ENCODE measurements at regions of chr6 and their contacts with region 1.

Region 1: GRCh38 chr6:53725791-53726431 is 60.4 kb upstream of the KLHL31 start:
- DNase-seq: peak; percentile 79
- ATAC-seq: peak; percentile 94
- H3K4me3 ChIP-seq: no peak overlapping the region
- H3K4me3 Mint-ChIP-seq: no peak overlapping the region
- H3K27ac ChIP-seq: no peak overlapping the region
- H3K27ac Mint-ChIP-seq: peak overlapping the region; percentile 1
- H3K4me1 ChIP-seq: peaks cover 6 to 8% of the 10 kb centered on the region in 2 donors
- H3K4me1 Mint-ChIP-seq: peaks cover 4% of the 10 kb centered on the region
- H3K27me3 ChIP-seq: peaks cover 0 to 4% (median 0%) of the 10 kb centered on the region in 4 experiments
- H3K27me3 Mint-ChIP-seq: peaks cover 13% of the 10 kb centered on the region
- CTCF ChIP-seq: peak; percentile 98

Region 2: DNA sequence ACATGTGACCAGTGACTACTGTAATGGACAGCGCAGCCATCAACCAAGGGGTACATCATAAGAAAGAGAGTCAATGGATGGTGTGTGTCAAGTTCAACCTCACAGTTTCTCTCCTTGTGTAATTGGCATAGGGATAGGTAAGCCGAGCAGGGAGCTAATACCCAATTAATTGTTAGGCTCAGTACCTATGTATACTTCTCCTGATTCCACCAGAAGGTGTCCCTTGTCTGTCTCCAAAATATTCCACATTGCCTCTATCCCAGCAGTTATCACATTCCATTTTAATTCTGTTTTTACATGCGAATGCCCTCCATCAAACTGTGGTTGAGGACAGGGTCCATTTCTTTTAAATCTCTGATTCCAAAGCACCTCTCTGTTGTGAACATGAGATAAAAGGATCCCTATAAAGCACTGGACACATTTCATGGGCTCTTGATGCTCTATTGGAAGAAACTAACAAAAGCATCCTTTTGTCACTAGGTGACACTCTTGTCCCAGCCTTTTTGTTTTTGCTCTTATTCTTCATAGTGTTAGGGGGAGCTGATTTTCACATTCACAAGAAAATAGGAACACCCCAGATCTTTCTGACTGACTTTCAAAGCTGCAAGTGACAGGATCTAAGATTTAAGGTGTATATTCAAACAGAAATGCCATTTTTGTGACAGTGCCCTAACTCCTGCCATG is 621.8 kb before region 1 on chr6:
- CTCF ChIA-PET with region 1: interaction called, 3 read pairs
- POLR2A ChIA-PET with region 1: no interaction called
- intact Hi-C with region 1: loop called (anchors 1 kb)
- DNase-seq: peak; percentile 52
- ATAC-seq: peak; percentile 53
- H3K4me3 ChIP-seq: no peak overlapping the region
- H3K4me3 Mint-ChIP-seq: no peak overlapping the region
- H3K27ac ChIP-seq: no peak overlapping the region
- H3K27ac Mint-ChIP-seq: no peak overlapping the region
- H3K4me1 ChIP-seq: no peaks in the 10 kb centered on the region
- H3K4me1 Mint-ChIP-seq: no peaks in the 10 kb centered on the region
- H3K27me3 ChIP-seq: no peaks in the 10 kb centered on the region
- H3K27me3 Mint-ChIP-seq: no peaks in the 10 kb centered on the region
- CTCF ChIP-seq: peak; percentile 54

Region 3: GRCh38 chr6:53544470-53545308 is 181.2 kb before region 1 on chr6 and contains the start of gene GCLC:
- CTCF ChIA-PET with region 1: interaction called, 6 read pairs
- POLR2A ChIA-PET with region 1: no interaction called
- intact Hi-C with region 1: loop called (anchors 5 kb)
- DNase-seq: peak; percentile 95
- ATAC-seq: peak; percentile 67
- H3K4me3 ChIP-seq: peak within 1 kb of the TSS; percentile 45 to 81 (median 69)
- H3K4me3 Mint-ChIP-seq: peak within 1 kb of the TSS; percentile 97
- H3K27ac ChIP-seq: peak within 1 kb of the TSS in 1 of 2 donors; percentile 68
- H3K27ac Mint-ChIP-seq: peak within 1 kb of the TSS; percentile 93
- H3K4me1 ChIP-seq: peaks cover 22 to 32% of the 10 kb centered on the region in 2 donors
- H3K4me1 Mint-ChIP-seq: peaks cover 52% of the 10 kb centered on the region
- H3K27me3 ChIP-seq: no peaks in the 10 kb centered on the region
- H3K27me3 Mint-ChIP-seq: no peaks in the 10 kb centered on the region
- CTCF ChIP-seq: peak; percentile 81
- total RNA-seq, gene GCLC: 25.8 and 37.8 TPM in 2 replicates

Region 4: GRCh38 chr6:53710788-53711187 is 15.1 kb before region 1 on chr6:
- CTCF ChIA-PET with region 1: interaction called, 66 read pairs
- POLR2A ChIA-PET with region 1: no interaction called
- intact Hi-C with region 1: no loop called
- DNase-seq: no peak
- ATAC-seq: no peak
- H3K4me3 ChIP-seq: no peak overlapping the region
- H3K4me3 Mint-ChIP-seq: no peak overlapping the region
- H3K27ac ChIP-seq: no peak overlapping the region
- H3K27ac Mint-ChIP-seq: no peak overlapping the region
- H3K4me1 ChIP-seq: no peaks in the 10 kb centered on the region
- H3K4me1 Mint-ChIP-seq: no peaks in the 10 kb centered on the region
- H3K27me3 ChIP-seq: peaks cover 0 to 9% (median 0%) of the 10 kb centered on the region in 4 experiments
- H3K27me3 Mint-ChIP-seq: peaks cover 32% of the 10 kb centered on the region
- CTCF ChIP-seq: no peak

Region 5: GRCh38 chr6:53746442-53747103 is 20.7 kb after region 1 on chr6:
- CTCF ChIA-PET with region 1: interaction called, 18 read pairs
- POLR2A ChIA-PET with region 1: no interaction called
- intact Hi-C with region 1: no loop called
- DNase-seq: no peak
- ATAC-seq: no peak
- H3K4me3 ChIP-seq: no peak overlapping the region
- H3K4me3 Mint-ChIP-seq: no peak overlapping the region
- H3K27ac ChIP-seq: no peak overlapping the region
- H3K27ac Mint-ChIP-seq: no peak overlapping the region
- H3K4me1 ChIP-seq: no peaks in the 10 kb centered on the region
- H3K4me1 Mint-ChIP-seq: no peaks in the 10 kb centered on the region
- H3K27me3 ChIP-seq: no peaks in the 10 kb centered on the region
- H3K27me3 Mint-ChIP-seq: no peaks in the 10 kb centered on the region
- CTCF ChIP-seq: no peak

Measured in B cell (primary cell).